Breast epithelium (tissue), 4 donors: ENCODE measurements at regions of chr3 and their contacts with region 1.

Region 1: DNA sequence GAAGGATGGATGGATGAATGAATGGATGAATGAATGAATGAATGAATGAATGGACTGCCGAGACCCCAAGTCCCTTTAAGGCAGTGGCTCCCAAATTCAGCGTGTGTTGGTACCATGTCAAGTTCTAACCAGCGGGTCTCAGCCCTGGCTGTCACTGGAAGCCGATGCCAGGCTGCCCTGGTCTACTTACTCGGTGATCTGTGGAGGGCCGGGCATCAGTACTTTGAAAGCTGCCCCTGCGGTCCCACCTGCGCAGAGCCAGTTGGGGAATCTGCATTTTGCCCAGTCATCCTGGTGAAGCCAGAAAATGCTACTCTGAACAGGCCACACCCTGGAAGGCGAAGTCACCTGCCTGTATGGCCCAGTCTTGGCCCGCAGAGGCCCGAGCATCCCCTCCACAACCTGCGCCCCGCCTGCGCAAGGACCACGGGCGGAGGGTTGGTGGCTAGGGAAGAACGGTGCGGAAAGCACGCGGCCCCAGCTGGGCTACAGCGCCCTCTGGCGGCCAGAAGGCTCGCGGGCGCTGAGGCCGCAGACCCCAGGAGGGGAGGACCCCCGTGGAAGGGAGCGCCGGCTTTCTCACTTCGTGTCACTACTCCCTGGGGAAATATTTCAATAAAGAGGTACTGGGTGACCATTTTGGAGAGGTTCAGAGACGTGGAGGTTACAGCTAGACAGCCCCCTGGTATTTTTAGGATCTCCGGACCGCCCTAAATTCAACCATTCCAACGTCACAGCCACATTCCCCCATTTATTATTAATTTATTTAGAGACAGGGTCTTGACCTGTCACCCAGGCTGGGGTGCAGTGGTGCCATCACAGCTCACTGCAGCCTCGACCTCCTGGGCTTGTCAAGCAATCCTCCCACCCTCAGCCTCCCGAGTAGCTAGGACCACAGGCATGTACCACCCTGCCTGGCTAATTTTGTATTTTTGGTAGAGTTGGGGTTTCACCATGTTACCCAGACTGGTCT is 34.9 kb downstream of the PRKCD start:
- DNase-seq: no peak
- H3K4me3 ChIP-seq: peak overlapping the region in 1 of 3 donors; percentile 36
- H3K27ac ChIP-seq: no peak overlapping the region
- H3K4me1 ChIP-seq: peaks cover 0 to 5% of the 10 kb centered on the region in 2 donors
- H3K27me3 ChIP-seq: no peaks in the 10 kb centered on the region
- CTCF ChIP-seq: peak; percentile 82 to 98 (median 96)
- POLR2A ChIP-seq: no peak

Region 2: DNA sequence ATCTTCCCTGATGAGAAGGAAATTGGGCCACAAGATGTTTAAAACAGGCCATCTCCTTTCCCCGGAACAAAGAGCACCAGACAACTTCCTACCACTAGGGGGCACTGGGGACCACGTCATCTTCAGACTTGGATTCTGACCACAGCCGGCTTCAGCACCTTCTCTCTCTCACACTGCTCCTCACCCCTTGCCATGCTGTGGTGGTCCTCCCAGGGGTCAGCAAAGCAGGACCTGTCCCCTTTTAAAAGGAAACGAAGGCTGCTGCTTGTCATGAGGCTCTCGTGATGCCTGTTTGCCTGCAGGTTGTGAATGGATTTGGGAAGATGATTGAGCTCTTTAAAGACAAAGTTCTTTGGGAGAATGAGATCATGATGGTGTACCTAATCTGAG is 81.9 kb before region 1 on chr3:
- intact Hi-C with region 1: loop called (anchors 5 kb)
- DNase-seq: peak; percentile 73 to 78
- H3K4me3 ChIP-seq: no peak overlapping the region
- H3K27ac ChIP-seq: no peak overlapping the region
- H3K4me1 ChIP-seq: peaks cover 0 to 8% of the 10 kb centered on the region in 2 donors
- H3K27me3 ChIP-seq: no peaks in the 10 kb centered on the region
- CTCF ChIP-seq: peak; percentile 86 to 96 (median 93)
- POLR2A ChIP-seq: no peak